AG04449 (cell line): ENCODE measurements at regions of chrX and their contacts with region 1.

Region 1: DNA sequence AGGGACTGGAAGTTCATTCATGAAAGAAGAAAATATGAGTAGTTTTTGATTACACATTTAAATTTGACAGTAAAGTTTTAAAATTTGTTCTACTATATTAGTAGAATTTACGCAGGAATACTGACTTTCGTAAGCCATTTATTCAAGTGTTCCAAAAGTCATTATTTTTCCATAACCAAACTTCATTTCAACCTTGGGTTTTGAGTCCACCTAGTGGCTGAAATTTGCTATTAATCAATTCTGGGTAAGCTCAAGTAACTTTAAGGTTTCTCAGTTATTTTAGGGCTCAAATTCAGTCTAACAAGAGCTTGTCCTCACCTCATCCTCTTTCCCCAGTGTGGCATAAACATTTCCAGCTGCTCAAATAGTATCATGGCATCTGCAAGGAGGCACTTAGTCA is 175.4 kb downstream of the SH3BGRL start:
- DNase-seq: no peak
- H3K4me3 ChIP-seq: no peak overlapping the region
- CTCF ChIP-seq: peak; percentile 24

Region 2: DNA sequence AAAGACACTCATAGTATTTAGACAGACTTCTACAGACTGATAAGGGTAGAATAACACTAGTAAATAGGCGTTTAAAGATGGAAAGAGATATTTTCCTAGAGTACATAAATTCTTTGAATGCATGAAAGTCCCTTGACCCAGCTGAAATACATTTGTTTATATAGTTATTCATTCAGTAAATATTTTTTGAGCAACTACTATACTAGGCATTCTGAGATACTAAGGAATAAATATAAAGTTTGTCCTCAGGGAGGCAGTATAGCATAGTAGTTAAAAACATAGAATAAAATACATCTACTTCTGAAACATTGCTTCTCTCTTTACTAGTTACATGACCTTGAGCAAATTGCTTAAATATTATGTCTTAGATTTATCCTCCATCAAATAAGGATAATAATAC is 203.0 kb before region 1 on chrX:
- CTCF ChIA-PET with region 1: interaction called, 17 read pairs
- POLR2A ChIA-PET with region 1: no interaction called
- DNase-seq: no peak
- H3K4me3 ChIP-seq: no peak overlapping the region
- CTCF ChIP-seq: peak; percentile 5

Region 3: GRCh38 chrX:81367291-81367690 is 10.0 kb before region 1 on chrX:
- CTCF ChIA-PET with region 1: no interaction called
- POLR2A ChIA-PET with region 1: no interaction called
- DNase-seq: no peak
- H3K4me3 ChIP-seq: no peak overlapping the region
- CTCF ChIP-seq: no peak